Activated CD8-positive, alpha-beta T cell treated with anti-CD3 and anti-CD28 coated beads, Interleukin-2, amount 10 ng/mL, durations not matched to agents 7 days and 5 days (primary cell): ENCODE measurements at regions of chr3 and their contacts with region 1.

Region 1: GRCh38 chr3:88003115-88003755 is 55.6 kb downstream of the CGGBP1 start:
- DNase-seq: no peak
- ATAC-seq: no peak
- H3K4me3 Mint-ChIP-seq: no peak overlapping the region
- H3K27ac Mint-ChIP-seq: no peak overlapping the region
- H3K4me1 Mint-ChIP-seq: peaks cover 15% of the 10 kb centered on the region
- H3K27me3 Mint-ChIP-seq: peaks cover 10% of the 10 kb centered on the region

Region 2: DNA sequence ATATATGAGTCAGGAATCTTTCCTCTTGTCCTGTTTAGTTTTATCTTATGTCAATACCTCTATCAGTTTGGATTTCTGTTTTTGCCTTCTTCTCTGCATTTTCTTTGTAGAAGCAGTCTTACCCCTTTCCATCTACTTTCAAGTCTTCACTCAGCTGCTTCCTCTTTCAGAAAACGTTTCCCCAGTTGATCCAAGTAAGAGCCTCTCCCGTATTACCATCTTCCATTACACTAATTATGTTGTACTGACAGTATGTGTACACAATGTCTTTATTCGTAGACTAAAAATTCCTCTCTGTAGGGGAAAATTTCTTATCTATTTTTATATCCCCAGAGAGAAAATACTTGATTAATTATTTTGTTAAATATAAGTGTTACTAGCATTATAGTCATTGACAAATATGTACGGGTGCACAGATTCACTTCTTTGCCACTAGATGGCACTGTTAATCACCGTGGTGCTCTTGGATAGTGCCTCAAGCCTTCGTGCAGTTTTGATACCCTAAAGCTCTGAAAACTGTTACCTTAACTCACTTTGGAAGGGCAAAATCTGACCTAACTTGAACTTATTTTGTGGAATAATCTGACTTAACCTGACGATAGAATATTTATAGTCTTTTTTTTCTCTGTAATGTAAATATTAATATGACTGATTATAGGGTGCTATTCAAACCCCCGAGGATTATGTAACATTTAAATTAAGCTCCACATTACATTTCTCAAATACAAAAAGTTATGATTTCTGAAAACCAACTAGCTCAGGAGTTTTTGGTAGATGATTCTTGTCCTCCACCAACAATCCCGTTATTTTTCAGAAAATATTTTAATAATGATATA is 652.7 kb before region 1 on chr3:
- CTCF ChIA-PET with region 1: interaction called, 14 read pairs
- POLR2A ChIA-PET with region 1: no interaction called
- DNase-seq: peak; percentile 45
- ATAC-seq: peak; percentile 93
- H3K4me3 Mint-ChIP-seq: no peak overlapping the region
- H3K27ac Mint-ChIP-seq: no peak overlapping the region
- H3K4me1 Mint-ChIP-seq: no peaks in the 10 kb centered on the region
- H3K27me3 Mint-ChIP-seq: peaks cover 13% of the 10 kb centered on the region

Region 3: GRCh38 chr3:87771341-87772192 is 231.7 kb before region 1 on chr3:
- CTCF ChIA-PET with region 1: interaction called, 17 read pairs
- POLR2A ChIA-PET with region 1: interaction called, 3 read pairs
- DNase-seq: peak; percentile 50
- ATAC-seq: peak; percentile 72
- H3K4me3 Mint-ChIP-seq: no peak overlapping the region
- H3K27ac Mint-ChIP-seq: no peak overlapping the region
- H3K4me1 Mint-ChIP-seq: no peaks in the 10 kb centered on the region
- H3K27me3 Mint-ChIP-seq: peaks cover 18% of the 10 kb centered on the region

Region 4: GRCh38 chr3:87837076-87837475 is 166.2 kb before region 1 on chr3:
- CTCF ChIA-PET with region 1: no interaction called
- POLR2A ChIA-PET with region 1: no interaction called
- DNase-seq: no peak
- ATAC-seq: no peak
- H3K4me3 Mint-ChIP-seq: no peak overlapping the region
- H3K27ac Mint-ChIP-seq: no peak overlapping the region
- H3K4me1 Mint-ChIP-seq: no peaks in the 10 kb centered on the region
- H3K27me3 Mint-ChIP-seq: no peaks in the 10 kb centered on the region

Region 5: DNA sequence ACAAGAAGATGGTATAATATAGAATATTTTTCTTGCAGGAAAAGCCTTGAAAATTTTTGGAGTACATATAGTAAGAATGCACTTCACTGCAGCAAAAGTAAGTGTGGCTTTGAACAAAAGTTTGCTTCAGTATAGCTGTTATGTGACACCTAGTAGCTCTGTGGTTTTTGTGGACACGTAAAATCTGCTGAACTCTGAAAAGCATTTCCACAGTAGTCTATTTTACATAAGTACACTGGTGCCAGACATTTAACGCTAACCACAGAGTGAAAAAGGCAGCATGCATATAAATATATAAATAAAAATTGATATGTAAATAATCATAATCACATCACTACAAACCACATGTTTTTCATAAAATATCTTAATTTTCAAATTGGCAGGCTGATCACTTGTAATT is 15.8 kb after region 1 on chr3:
- CTCF ChIA-PET with region 1: interaction called, 10 read pairs
- POLR2A ChIA-PET with region 1: no interaction called
- DNase-seq: peak; percentile 56
- ATAC-seq: peak; percentile 93
- H3K4me3 Mint-ChIP-seq: no peak overlapping the region
- H3K27ac Mint-ChIP-seq: no peak overlapping the region
- H3K4me1 Mint-ChIP-seq: peaks cover 12% of the 10 kb centered on the region
- H3K27me3 Mint-ChIP-seq: peaks cover 10% of the 10 kb centered on the region